Gastrocnemius medialis (tissue), 4 donors: ENCODE measurements at regions of chr2 and their contacts with region 1.

Region 1: GRCh38 chr2:229489016-229489415 is 217.9 kb upstream of the PID1 start:
- DNase-seq: peak; percentile 15 to 62
- ATAC-seq: peak; percentile 39 to 58
- H3K4me3 ChIP-seq: no peak overlapping the region
- H3K27ac ChIP-seq: no peak overlapping the region
- H3K4me1 ChIP-seq: no peaks in the 10 kb centered on the region
- H3K27me3 ChIP-seq: no peaks in the 10 kb centered on the region
- CTCF ChIP-seq: no peak
- POLR2A ChIP-seq: no peak

Region 2: DNA sequence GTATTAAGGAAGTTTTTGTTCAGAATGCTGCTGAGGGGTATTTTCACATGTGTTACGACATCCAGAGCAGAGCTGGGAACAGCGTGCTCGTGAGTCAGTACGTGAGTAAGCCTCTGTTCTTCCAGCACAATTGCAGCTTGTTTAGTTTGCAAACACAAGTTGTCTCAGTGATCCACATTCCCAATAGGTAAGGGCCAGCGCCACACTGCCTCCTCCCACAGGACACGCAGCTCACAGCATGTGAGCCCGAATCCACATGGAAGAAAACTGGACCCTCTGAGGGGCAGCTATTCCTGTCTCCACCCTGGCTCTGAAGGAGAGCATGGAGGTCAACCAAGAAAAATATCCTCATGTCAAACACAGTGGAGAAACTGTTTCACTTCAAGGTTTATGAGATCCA is 44.0 kb before region 1 on chr2:
- in situ Hi-C with region 1: no loop called
- intact Hi-C with region 1: loop called (anchors 5 kb)
- DNase-seq: peak; percentile 68 to 78
- ATAC-seq: peak; percentile 91
- H3K4me3 ChIP-seq: peak overlapping the region in 2 of 4 donors; percentile 3 to 17
- H3K27ac ChIP-seq: peak overlapping the region; percentile 79 to 88 (median 84)
- H3K4me1 ChIP-seq: peaks cover 10 to 31% of the 10 kb centered on the region in 2 donors
- H3K27me3 ChIP-seq: no peaks in the 10 kb centered on the region
- CTCF ChIP-seq: no peak
- POLR2A ChIP-seq: peak; percentile 41 to 43

Region 3: DNA sequence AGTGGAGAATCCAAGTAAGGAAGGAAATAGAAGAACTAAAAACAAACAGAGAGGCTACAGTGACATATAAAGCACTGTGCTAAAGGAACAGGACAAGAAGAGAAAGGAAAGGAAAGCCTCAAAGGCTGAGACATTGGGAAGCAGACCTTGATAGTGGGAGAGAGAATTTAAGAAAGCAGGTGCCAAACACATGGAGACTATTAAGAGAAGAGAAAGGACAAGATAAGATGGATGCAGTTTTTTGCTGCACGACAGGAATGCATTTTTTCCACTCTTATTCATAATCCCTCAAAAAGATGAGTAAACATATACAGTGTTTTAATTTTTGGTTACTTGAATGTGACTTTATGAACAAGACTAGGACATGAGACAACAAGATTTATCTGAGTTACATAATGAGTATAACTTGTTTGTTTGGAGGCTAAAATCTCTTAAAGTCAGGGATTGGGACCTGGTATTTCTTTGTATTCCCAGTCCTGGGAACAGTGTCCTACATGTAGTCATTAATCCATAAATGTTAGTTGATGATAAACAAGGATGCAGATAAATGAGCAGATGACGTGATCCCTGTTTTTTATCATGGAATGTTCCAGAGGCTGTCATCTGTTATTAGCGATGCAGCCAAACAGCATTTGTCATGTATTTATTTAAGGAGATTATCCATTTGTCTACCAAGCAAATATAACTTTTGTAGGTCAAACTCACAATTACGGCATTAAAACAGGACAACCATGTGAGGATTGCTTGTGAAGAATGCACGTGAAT is 83.7 kb after region 1 on chr2:
- in situ Hi-C with region 1: no loop called
- intact Hi-C with region 1: loop called (anchors 10 kb)
- DNase-seq: no peak
- ATAC-seq: no peak
- H3K4me3 ChIP-seq: no peak overlapping the region
- H3K27ac ChIP-seq: no peak overlapping the region
- H3K4me1 ChIP-seq: no peaks in the 10 kb centered on the region
- H3K27me3 ChIP-seq: no peaks in the 10 kb centered on the region
- CTCF ChIP-seq: no peak
- POLR2A ChIP-seq: no peak